ENCODE measurements at regions of chr12 and their contacts with region 1.

Region 1: GRCh38 chr12:98644711-98645402 is at the starts of genes APAF1 and IKBIP:
- DNase-seq: peak; percentile 96 to 99
- ATAC-seq: peak; percentile 97 to 100 (median 98)
- H3K4me3 ChIP-seq: peak within 1 kb of the TSS; percentile 68 to 99 (median 90)
- H3K27ac ChIP-seq: peak within 1 kb of the TSS; percentile 70 to 95 (median 90)
- H3K4me1 ChIP-seq: peaks cover 0 to 42% (median 21%) of the 10 kb centered on the region in 9 donors
- H3K27me3 ChIP-seq: no peaks in the 10 kb centered on the region
- CTCF ChIP-seq: peak in 2 of 9 donors; percentile 3 to 26
- total RNA-seq, gene APAF1: 2.5 to 9.9 (median 4.4) TPM
- total RNA-seq, gene IKBIP: 2.4 to 13.4 (median 4.3) TPM

Region 2: GRCh38 chr12:98418357-98419075 is 226.3 kb before region 1 on chr12:
- intact Hi-C with region 1: loop called in 3 of 10 experiments (anchors 5 to 10 kb)
- DNase-seq: peak; percentile 75 to 78
- ATAC-seq: peak; percentile 70 to 87 (median 82)
- H3K4me3 ChIP-seq: no peak overlapping the region
- H3K27ac ChIP-seq: peak overlapping the region in 8 of 10 donors; percentile 2 to 72 (median 46)
- H3K4me1 ChIP-seq: peaks cover 0 to 32% (median 23%) of the 10 kb centered on the region in 9 donors
- H3K27me3 ChIP-seq: no peaks in the 10 kb centered on the region
- CTCF ChIP-seq: no peak

Region 3: DNA sequence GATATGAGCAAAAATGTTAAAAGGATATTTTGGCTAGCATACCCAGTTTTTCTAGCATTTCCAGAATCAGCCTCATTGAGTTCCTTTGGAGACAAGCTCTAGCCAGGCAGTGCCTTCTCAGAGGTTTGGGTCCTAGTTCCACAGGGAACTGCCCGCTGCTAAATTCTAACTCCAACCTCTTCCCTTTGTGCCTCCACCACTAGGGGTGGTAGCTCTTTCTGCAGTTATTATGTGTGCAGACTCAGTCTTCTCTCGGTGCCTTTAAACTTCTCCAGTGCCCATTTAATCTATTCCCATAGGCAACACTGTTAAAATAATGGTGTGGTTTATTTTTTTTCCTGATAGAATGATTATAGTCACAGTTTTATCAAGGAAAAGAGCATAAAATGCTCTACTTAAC is 72.8 kb before region 1 on chr12:
- intact Hi-C with region 1: loop called in 5 of 10 experiments (anchors 5 to 10 kb)
- DNase-seq: no peak
- ATAC-seq: peak in 2 of 8 donors; percentile 33 to 44
- H3K4me3 ChIP-seq: no peak overlapping the region
- H3K27ac ChIP-seq: no peak overlapping the region
- H3K4me1 ChIP-seq: peaks cover 0 to 5% (median 0%) of the 10 kb centered on the region in 9 donors
- H3K27me3 ChIP-seq: no peaks in the 10 kb centered on the region
- CTCF ChIP-seq: peak in 4 of 9 donors; percentile 13 to 28 (median 18)

Region 4: DNA sequence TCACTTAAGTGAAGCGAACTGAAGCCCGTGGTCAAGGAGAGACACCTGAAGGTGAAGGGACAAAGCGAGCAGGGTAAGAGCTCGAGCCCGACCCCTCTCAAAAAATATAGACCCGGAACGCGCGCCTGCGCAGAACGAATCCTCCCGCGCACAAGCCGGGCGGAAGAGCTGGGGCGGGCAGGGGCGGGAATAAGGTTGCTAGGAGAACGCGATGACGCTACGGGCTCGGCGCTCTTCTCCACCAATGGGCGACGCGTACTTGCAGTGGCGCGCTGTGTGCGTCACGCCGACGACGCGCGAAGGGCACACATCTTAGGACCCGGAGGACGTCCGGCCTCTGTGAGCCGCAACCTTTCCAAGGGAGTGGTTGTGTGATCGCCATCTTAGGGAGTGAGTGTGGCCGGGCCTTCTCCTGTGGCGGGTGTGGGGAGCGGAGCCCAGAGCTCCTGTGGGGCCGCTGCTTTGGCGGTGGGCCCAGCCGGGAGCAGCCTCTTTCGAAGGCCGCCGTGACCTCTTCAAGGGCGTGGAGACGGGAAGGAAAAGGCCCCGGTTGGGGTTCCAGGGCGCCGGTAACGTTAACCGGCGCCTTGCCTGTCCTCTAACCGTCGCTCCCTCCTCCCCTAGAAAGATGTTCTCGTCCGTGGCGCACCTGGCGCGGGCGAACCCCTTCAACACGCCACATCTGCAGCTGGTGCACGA is 51.4 kb before region 1 on chr12 and contains the start of gene SLC25A3:
- intact Hi-C with region 1: loop called in 8 of 10 experiments (anchors 1 to 10 kb)
- DNase-seq: peak; percentile 97
- ATAC-seq: peak; percentile 99
- H3K4me3 ChIP-seq: peak within 1 kb of the TSS; percentile 76 to 99 (median 91)
- H3K27ac ChIP-seq: peak within 1 kb of the TSS; percentile 97 to 100 (median 99)
- H3K4me1 ChIP-seq: peaks cover 14 to 41% (median 27%) of the 10 kb centered on the region in 9 donors
- H3K27me3 ChIP-seq: no peaks in the 10 kb centered on the region
- CTCF ChIP-seq: no peak
- total RNA-seq, gene SLC25A3: 1,098 to 2,142 (median 1,719) TPM

Region 5: GRCh38 chr12:98686603-98687002 is 41.7 kb after region 1 on chr12:
- intact Hi-C with region 1: no loop called
- DNase-seq: no peak
- ATAC-seq: no peak
- H3K4me3 ChIP-seq: no peak overlapping the region
- H3K27ac ChIP-seq: no peak overlapping the region
- H3K4me1 ChIP-seq: peaks cover 0 to 5% (median 0%) of the 10 kb centered on the region in 9 donors
- H3K27me3 ChIP-seq: no peaks in the 10 kb centered on the region
- CTCF ChIP-seq: no peak